Left ventricle myocardium superior (tissue), 1 donor: ENCODE measurements at regions of chr16 and their contacts with region 1.

Region 1: GRCh38 chr16:10743610-10744393 is at the start of gene NUBP1:
- DNase-seq: peak; percentile 99
- ATAC-seq: peak; percentile 95
- total RNA-seq, gene NUBP1: 45.9 TPM

Region 2: GRCh38 chr16:10629587-10629963 is 114.2 kb before region 1 on chr16:
- intact Hi-C with region 1: no loop called
- DNase-seq: no peak
- ATAC-seq: no peak

Region 3: DNA sequence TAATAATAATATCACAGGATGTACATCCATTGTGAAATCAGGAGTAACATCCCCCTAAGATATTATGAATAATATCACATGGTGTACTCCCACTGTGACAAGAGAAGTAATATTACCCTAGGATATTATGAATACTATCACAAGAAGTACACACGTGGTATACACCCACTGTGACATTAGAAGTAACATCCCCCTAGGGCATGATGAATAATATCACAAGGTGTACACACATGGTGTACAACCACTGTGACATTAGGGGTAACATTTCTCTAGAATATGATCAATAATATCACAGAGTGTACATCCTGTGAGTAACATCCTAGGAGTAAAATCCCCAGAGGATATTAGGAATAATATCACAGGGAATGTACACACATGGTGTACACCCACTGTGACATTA is 44.0 kb before region 1 on chr16:
- intact Hi-C with region 1: no loop called
- DNase-seq: no peak
- ATAC-seq: no peak

Region 4: DNA sequence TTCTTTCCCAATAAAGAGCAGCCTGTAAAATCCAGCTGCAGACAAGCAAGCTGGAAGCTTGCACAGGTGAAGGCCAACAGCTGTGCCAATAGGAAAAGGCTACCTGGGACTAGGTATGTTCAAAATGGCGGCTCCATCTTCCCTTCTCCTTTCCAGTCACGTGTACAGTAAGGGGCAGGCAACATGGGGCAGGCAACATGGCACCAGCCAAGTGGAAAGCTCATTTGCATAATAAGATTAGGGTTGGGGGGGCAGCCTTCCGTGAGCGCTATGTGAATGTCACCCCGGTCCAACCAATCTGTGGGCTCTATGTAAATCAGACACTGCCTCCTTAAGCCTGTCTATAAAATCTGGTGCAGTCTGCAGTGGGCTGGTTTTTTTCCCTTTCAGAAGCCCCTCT is 43.5 kb after region 1 on chr16:
- intact Hi-C with region 1: no loop called
- DNase-seq: no peak
- ATAC-seq: no peak

Region 5: DNA sequence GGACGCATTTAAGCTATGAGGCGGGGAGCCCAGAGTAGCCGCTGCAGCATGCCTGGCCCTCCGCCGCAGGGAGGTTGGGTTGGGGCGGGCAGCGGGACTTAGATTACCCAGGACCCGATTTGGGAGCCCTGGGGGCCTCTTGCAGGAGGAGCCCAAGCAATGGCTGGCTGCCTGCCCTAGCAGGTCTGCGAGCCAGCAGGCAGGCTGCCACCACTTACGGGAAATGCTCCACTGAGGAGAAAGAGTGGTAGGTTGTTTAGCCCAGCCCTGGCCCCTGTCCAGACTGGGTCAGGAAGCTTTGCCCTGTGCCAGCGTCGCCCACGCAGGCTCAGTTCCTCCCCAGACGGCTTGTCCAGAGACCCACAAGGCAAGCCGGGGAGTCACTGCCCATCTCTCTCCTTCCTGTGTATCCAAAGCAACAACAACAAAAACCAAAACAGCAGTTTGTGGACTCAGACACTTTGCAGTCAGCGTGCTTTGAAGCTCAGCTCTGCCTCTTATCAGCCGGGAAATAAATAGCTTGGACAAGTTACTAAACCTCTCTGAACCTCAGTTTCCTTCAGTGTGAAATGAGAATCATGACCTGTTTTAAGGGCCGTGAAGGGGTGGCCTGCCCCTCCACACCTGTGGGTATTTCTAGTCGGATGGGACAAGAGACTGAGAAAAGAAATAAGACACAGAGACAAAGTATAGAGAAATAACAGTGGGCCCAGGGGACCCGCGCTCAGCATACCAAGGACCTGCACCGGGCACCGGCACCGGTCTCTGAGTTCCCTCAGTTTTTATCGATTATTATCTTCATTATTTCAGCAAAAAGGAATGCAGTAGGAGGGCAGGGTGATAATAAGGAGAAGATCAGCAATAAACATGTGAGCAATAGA is 85.3 kb after region 1 on chr16:
- intact Hi-C with region 1: loop called (anchors 10 kb)
- DNase-seq: peak; percentile 98
- ATAC-seq: peak; percentile 86

Region 6: GRCh38 chr16:10918294-10919002 is 174.6 kb after region 1 on chr16:
- intact Hi-C with region 1: loop called (anchors 10 kb)
- DNase-seq: peak; percentile 92
- ATAC-seq: peak; percentile 72